ENCODE measurements at regions of chr14 and their contacts with region 1.

Region 1: DNA sequence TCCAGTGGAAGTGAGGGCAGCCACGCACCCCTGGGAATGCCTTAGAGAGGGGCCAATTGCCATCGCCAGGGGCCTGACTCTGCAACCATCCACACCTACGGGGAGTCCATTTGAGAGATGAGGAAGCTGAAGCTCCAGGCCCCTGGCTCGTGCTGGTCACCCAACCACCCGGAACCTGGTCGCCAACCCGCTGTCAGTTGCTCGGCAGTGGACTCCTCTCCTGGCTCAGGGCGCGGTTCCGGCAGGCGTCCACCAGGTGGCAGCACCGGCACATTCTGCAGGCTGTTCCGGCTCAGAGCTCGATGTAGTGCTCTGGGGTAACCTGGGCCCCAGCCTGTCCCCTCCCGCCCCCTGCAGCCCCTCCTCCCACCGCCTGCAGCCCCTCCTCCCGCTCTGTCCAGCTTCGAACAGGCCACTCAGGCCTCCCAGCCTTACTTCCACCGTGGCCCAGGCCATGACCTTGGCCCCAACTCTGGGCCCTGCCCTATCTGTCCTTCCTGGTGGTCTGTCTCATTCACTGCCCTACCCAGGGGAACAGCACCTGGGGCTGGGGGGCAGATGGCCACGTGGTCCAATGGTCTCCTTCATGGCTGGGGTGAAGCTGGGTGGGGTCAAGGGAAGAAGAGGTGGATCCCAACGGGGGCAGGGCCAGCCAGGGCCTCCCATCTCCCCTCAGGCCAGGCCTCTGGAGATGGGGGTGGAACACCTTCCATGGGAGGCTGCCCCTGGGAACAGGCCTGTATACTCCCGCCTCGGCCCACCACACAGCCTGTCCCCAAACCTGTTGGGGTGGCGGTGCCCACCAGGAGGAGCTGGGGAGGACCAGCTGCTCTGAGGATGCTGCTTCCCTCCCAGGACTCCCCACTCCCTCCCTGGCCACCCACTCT is 15.7 kb downstream of the SIVA1 start:
- DNase-seq: peak; percentile 91 to 98
- ATAC-seq: peak; percentile 92
- H3K4me3 ChIP-seq: no peak overlapping the region
- H3K27ac ChIP-seq: no peak overlapping the region
- H3K4me1 ChIP-seq: no peaks in the 10 kb centered on the region
- H3K27me3 ChIP-seq: no peaks in the 10 kb centered on the region

Region 2: GRCh38 chr14:104749111-104749649 is 19.5 kb before region 1 on chr14:
- intact Hi-C with region 1: no loop called
- DNase-seq: peak in 1 of 2 donors; percentile 77
- ATAC-seq: no peak
- H3K4me3 ChIP-seq: no peak overlapping the region
- H3K27ac ChIP-seq: peak overlapping the region in 1 of 2 donors; percentile 89
- H3K4me1 ChIP-seq: peaks cover 0 to 3% of the 10 kb centered on the region in 2 donors
- H3K27me3 ChIP-seq: no peaks in the 10 kb centered on the region

Region 3: DNA sequence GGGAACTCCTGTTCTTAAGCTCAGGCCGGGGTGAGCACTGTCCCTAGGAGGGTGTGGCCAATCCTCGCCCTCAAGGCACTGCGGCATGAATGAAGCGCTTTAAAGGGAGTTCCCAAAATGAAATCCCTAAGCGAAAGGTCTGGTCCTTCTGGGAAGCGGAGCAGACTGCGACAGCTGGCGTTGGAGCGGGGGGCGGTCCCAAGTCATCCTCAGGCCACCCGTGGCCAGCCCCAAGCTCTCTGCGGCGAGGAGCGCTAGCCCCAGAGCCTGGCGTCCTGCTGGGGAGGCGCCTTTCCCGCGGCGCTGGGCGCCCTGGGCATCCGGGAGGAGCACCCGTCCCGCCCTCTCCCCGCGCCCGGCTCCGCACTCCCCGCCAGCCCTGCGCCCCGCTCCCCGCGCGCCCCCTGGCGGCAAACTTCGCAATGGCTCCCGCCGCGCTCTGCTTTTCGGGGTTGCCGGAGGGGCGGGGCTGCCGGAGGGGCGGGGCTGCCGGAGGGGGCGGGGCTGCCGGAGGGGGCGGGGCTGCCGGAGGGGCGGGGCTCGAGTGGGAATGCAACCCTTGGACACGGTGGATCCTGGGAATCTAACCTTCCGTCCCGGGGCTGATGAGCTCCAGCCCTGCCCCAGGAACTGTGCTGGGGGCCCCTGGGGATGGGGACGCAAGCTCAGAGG is 57.6 kb after region 1 on chr14:
- intact Hi-C with region 1: loop called (anchors 1 to 2 kb)
- DNase-seq: peak; percentile 94 to 98
- ATAC-seq: peak; percentile 96
- H3K4me3 ChIP-seq: peak overlapping the region; percentile 27 to 41
- H3K27ac ChIP-seq: no peak overlapping the region
- H3K4me1 ChIP-seq: no peaks in the 10 kb centered on the region
- H3K27me3 ChIP-seq: no peaks in the 10 kb centered on the region